ENCODE measurements at regions of chr13 and their contacts with region 1.

Region 1: GRCh38 chr13:30617315-30618185 is at the start of gene USPL1:
- DNase-seq: peak; percentile 99
- H3K4me3 ChIP-seq: peak within 1 kb of the TSS; percentile 71 to 78 (median 75)
- H3K27ac ChIP-seq: peak within 1 kb of the TSS; percentile 96
- H3K4me1 ChIP-seq: peaks cover 3% of the 10 kb centered on the region
- H3K27me3 ChIP-seq: no peaks in the 10 kb centered on the region
- CTCF ChIP-seq: peak in 1 of 2 donors; percentile 20
- total RNA-seq, gene USPL1: 12.4 to 13.5 TPM

Region 2: DNA sequence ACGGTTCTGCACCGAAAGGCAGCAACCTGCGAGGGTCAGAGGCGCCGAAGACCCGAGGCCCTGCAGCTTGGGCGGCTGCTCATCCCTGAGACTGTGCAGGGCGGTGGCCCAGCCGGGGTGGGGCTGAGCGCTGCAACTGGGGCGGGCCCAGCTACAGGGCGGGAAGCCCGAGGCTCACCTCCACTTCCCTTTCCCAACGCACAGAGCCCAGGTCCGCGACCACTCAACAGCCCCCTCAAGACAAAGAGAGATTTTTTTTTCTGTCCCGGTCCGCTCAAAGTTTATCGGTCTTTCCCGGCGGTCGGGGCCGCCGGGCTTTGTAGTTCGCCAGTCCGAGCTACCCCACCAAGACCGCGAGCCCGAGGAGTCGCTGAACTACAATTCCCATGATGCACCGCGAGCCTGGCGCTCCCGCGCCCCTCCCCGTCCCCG is 310.8 kb before region 1 on chr13:
- CTCF ChIA-PET with region 1: no interaction called
- dilution Hi-C with region 1: no loop called
- in situ Hi-C with region 1: no loop called
- intact Hi-C with region 1: loop called (anchors 1 kb)
- DNase-seq: peak; percentile 87
- H3K4me3 ChIP-seq: peak overlapping the region; percentile 94 to 96 (median 96)
- H3K27ac ChIP-seq: peak overlapping the region; percentile 67
- H3K4me1 ChIP-seq: peaks cover 23% of the 10 kb centered on the region
- H3K27me3 ChIP-seq: no peaks in the 10 kb centered on the region
- CTCF ChIP-seq: no peak

Region 3: GRCh38 chr13:30493658-30494381 is 123.7 kb before region 1 on chr13:
- CTCF ChIA-PET with region 1: no interaction called
- dilution Hi-C with region 1: no loop called
- in situ Hi-C with region 1: no loop called
- intact Hi-C with region 1: no loop called
- DNase-seq: no peak
- H3K4me3 ChIP-seq: no peak overlapping the region
- H3K27ac ChIP-seq: no peak overlapping the region
- H3K4me1 ChIP-seq: no peaks in the 10 kb centered on the region
- H3K27me3 ChIP-seq: no peaks in the 10 kb centered on the region
- CTCF ChIP-seq: no peak

Region 4: GRCh38 chr13:30572859-30573275 is 44.7 kb before region 1 on chr13:
- CTCF ChIA-PET with region 1: no interaction called
- dilution Hi-C with region 1: no loop called
- in situ Hi-C with region 1: no loop called
- intact Hi-C with region 1: loop called (anchors 2 kb)
- DNase-seq: peak; percentile 37
- H3K4me3 ChIP-seq: peak overlapping the region; percentile 31 to 53 (median 46)
- H3K27ac ChIP-seq: peak overlapping the region; percentile 71
- H3K4me1 ChIP-seq: peaks cover 35% of the 10 kb centered on the region
- H3K27me3 ChIP-seq: no peaks in the 10 kb centered on the region
- CTCF ChIP-seq: peak in 1 of 2 donors; percentile 33

Region 5: DNA sequence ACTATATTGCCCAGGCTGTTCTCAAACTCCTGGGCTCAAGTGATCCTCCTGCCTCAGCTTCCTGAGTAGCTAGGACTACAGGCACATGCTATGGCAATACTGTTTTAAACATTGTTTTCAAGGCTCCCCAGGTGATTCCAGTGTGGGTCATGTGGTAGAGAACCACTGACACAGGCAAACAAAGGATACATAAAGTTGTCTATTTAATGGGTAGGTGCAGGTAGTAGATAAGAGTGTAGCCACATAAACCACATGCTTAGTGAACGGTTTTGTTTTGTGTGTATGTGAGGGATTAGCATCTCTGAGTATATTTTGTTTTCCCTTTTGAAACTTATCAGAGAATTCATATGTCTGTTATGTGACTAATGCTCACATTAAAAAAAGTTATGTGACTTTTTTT is 36.9 kb after region 1 on chr13:
- CTCF ChIA-PET with region 1: no interaction called
- dilution Hi-C with region 1: no loop called
- in situ Hi-C with region 1: no loop called
- intact Hi-C with region 1: no loop called
- DNase-seq: no peak
- H3K4me3 ChIP-seq: no peak overlapping the region
- H3K27ac ChIP-seq: no peak overlapping the region
- H3K4me1 ChIP-seq: no peaks in the 10 kb centered on the region
- H3K27me3 ChIP-seq: no peaks in the 10 kb centered on the region
- CTCF ChIP-seq: no peak

Region 6: GRCh38 chr13:30739761-30740642 is 122.5 kb after region 1 on chr13:
- CTCF ChIA-PET with region 1: no interaction called
- dilution Hi-C with region 1: no loop called
- in situ Hi-C with region 1: no loop called
- intact Hi-C with region 1: loop called (anchors 1 kb)
- DNase-seq: peak; percentile 92
- H3K4me3 ChIP-seq: no peak overlapping the region
- H3K27ac ChIP-seq: peak overlapping the region; percentile 54
- H3K4me1 ChIP-seq: peaks cover 45% of the 10 kb centered on the region
- H3K27me3 ChIP-seq: no peaks in the 10 kb centered on the region
- CTCF ChIP-seq: no peak

Region 7: DNA sequence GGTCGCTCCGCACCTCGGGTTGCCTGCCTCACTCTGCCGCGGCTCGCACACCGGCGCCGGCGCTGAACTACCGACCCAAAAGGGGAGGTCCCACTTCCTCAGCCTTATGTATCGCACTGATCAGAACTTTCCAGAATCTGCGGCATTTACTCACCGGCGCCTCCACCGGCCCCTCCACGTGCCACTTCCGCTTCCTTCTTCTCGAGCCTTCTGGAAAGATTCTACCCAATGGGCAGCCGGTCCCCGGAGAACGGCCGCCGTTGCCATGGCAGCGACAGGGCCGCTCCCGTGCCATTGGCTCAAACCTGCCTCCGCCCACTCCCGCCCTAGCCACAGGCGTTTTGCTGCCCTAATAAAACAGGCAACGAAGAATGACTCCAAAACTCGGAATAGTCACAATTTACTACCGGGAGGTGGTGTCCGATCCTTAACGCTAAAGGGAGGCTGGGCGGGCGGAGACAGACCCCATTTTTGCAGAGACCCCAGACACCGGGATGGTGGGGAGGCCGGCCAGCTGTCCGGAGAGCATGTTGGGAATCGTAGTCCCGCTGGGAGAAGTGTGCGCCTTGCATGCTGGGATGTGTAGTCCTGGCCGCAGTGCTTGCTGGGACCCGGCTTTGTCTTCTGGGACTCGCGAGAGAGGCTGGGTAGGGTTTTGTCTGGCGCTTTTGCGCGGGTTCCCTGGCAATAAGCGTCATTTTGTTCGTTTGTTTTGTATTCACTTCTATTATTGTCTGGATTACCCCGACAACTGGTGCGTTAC is 544.5 kb after region 1 on chr13 and contains the start of gene HSPH1:
- CTCF ChIA-PET with region 1: no interaction called
- dilution Hi-C with region 1: no loop called
- in situ Hi-C with region 1: no loop called
- intact Hi-C with region 1: loop called (anchors 5 kb)
- DNase-seq: peak; percentile 99
- H3K4me3 ChIP-seq: peak within 1 kb of the TSS; percentile 81 to 90 (median 84)
- H3K27ac ChIP-seq: peak within 1 kb of the TSS; percentile 97
- H3K4me1 ChIP-seq: peaks cover 7% of the 10 kb centered on the region
- H3K27me3 ChIP-seq: no peaks in the 10 kb centered on the region
- CTCF ChIP-seq: peak in 1 of 2 donors; percentile 35
- total RNA-seq, gene HSPH1: 49.0 to 113 TPM